ENCODE measurements at regions of chr18 and their contacts with region 1.

Region 1: GRCh38 chr18:57276739-57277298 is 75.5 kb upstream of the ST8SIA3 start:
- DNase-seq: no peak
- H3K4me3 ChIP-seq: no peak overlapping the region
- H3K27ac ChIP-seq: no peak overlapping the region
- H3K4me1 ChIP-seq: no peaks in the 10 kb centered on the region
- H3K27me3 ChIP-seq: no peaks in the 10 kb centered on the region
- CTCF ChIP-seq: no peak
- POLR2A ChIP-seq: no peak

Region 2: GRCh38 chr18:56052202-56052601 is 1224.6 kb before region 1 on chr18:
- CTCF ChIA-PET with region 1: no interaction called
- POLR2A ChIA-PET with region 1: no interaction called
- dilution Hi-C with region 1: no loop called
- intact Hi-C with region 1: loop called (anchors 10 kb)
- DNase-seq: no peak
- H3K4me3 ChIP-seq: no peak overlapping the region
- H3K27ac ChIP-seq: no peak overlapping the region
- H3K4me1 ChIP-seq: no peaks in the 10 kb centered on the region
- H3K27me3 ChIP-seq: no peaks in the 10 kb centered on the region
- CTCF ChIP-seq: no peak
- POLR2A ChIP-seq: no peak

Region 3: DNA sequence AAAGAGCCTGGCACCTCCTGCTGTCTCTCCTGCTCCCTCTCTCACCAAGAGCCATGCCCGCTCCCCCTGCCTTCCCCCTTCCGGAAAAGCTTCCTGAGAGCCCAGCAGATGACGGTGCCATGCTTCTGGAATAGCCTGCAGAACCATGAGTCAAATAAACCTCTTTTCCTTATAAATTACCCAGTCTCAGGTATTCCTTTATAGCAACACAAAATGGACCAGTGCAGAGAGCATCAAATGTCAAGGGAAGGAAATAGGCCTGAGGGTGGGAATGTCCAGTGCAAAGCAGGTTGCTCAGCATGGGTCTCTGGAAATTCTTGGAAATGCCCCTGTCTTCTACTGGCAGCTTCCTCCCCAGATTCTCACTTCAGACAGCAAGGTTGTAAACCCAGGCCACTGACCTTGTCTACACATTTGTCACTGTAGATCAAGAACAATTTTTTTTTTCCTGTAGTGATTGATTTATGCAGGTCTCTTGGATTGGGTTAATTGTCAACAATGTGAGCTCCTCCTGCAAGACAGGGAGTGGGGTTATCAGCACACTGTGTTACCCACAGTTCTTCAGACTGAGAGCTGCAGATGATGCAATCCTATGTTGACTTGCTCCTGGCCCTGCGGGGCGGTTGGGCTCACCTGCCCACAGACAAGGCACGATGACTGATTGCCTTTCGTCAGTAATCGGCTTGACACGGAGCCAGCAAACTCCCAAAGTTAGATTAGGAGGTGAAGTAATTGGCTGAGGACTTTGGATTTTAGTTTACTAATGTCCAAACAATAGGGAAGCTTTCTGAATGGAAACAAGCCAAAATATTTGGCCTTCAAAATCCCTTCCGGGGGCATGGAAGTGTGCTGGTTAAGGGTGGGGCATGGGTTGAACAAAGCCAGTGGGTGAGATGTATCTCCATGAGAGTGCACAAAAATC is 135.3 kb before region 1 on chr18:
- CTCF ChIA-PET with region 1: no interaction called
- POLR2A ChIA-PET with region 1: no interaction called
- dilution Hi-C with region 1: loop called (anchors 25 kb)
- intact Hi-C with region 1: no loop called
- DNase-seq: no peak
- H3K4me3 ChIP-seq: no peak overlapping the region
- H3K27ac ChIP-seq: no peak overlapping the region
- H3K4me1 ChIP-seq: no peaks in the 10 kb centered on the region
- H3K27me3 ChIP-seq: no peaks in the 10 kb centered on the region
- CTCF ChIP-seq: no peak
- POLR2A ChIP-seq: no peak